ENCODE measurements at regions of chr3 and their contacts with region 1.

Region 1: GRCh38 chr3:150970665-150971324 is 1.7 kb downstream of the CLRN1 start:
- DNase-seq: peak; percentile 22
- ATAC-seq: no peak
- H3K4me3 ChIP-seq: no peak overlapping the region
- H3K27ac ChIP-seq: no peak overlapping the region
- H3K4me1 ChIP-seq: no peaks in the 10 kb centered on the region
- H3K27me3 ChIP-seq: peaks cover 12% of the 10 kb centered on the region
- CTCF ChIP-seq: no peak

Region 2: GRCh38 chr3:150062492-150062891 is 908.3 kb before region 1 on chr3:
- CTCF ChIA-PET with region 1: no interaction called
- POLR2A ChIA-PET with region 1: no interaction called
- in situ Hi-C with region 1: no loop called
- intact Hi-C with region 1: no loop called
- DNase-seq: no peak
- ATAC-seq: peak; percentile 73
- H3K4me3 ChIP-seq: no peak overlapping the region
- H3K27ac ChIP-seq: peak overlapping the region; percentile 71
- H3K4me1 ChIP-seq: peaks cover 9% of the 10 kb centered on the region
- H3K27me3 ChIP-seq: no peaks in the 10 kb centered on the region
- CTCF ChIP-seq: no peak

Region 3: DNA sequence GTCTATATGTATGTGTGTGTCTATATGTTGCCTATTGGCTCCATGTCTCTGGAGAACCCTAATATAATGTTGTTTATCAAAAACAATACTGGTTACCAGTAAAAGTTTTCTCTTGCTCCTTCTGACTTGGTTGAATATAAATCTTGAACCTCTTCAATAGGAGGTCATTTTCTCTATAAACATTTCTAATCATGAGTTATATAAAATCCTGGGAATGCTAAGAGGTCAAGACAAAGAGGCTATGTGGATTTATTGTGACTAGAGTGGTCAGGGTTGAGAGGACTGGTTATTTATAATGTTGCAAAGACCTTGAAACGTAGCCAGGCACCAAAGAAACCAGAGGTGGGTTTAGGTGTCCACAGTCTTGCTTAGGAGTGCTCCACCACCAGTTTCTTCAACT is 64.3 kb before region 1 on chr3:
- CTCF ChIA-PET with region 1: no interaction called
- POLR2A ChIA-PET with region 1: no interaction called
- in situ Hi-C with region 1: no loop called
- intact Hi-C with region 1: no loop called
- DNase-seq: no peak
- ATAC-seq: no peak
- H3K4me3 ChIP-seq: no peak overlapping the region
- H3K27ac ChIP-seq: no peak overlapping the region
- H3K4me1 ChIP-seq: no peaks in the 10 kb centered on the region
- H3K27me3 ChIP-seq: peaks cover 66% of the 10 kb centered on the region
- CTCF ChIP-seq: no peak

Region 4: GRCh38 chr3:150942221-150942620 is 28.6 kb before region 1 on chr3:
- CTCF ChIA-PET with region 1: no interaction called
- POLR2A ChIA-PET with region 1: no interaction called
- in situ Hi-C with region 1: no loop called
- intact Hi-C with region 1: loop called (anchors 1 kb)
- DNase-seq: no peak
- ATAC-seq: no peak
- H3K4me3 ChIP-seq: no peak overlapping the region
- H3K27ac ChIP-seq: no peak overlapping the region
- H3K4me1 ChIP-seq: no peaks in the 10 kb centered on the region
- H3K27me3 ChIP-seq: peaks cover 20% of the 10 kb centered on the region
- CTCF ChIP-seq: no peak

Region 5: GRCh38 chr3:151003029-151003763 is 32.4 kb after region 1 on chr3:
- CTCF ChIA-PET with region 1: no interaction called
- POLR2A ChIA-PET with region 1: no interaction called
- in situ Hi-C with region 1: no loop called
- intact Hi-C with region 1: no loop called
- DNase-seq: peak; percentile 12
- ATAC-seq: no peak
- H3K4me3 ChIP-seq: no peak overlapping the region
- H3K27ac ChIP-seq: no peak overlapping the region
- H3K4me1 ChIP-seq: no peaks in the 10 kb centered on the region
- H3K27me3 ChIP-seq: no peaks in the 10 kb centered on the region; the same call in 1 of the 2 replicates
- CTCF ChIP-seq: no peak